ENCODE measurements at regions of chr15 and their contacts with region 1.

Region 1: DNA sequence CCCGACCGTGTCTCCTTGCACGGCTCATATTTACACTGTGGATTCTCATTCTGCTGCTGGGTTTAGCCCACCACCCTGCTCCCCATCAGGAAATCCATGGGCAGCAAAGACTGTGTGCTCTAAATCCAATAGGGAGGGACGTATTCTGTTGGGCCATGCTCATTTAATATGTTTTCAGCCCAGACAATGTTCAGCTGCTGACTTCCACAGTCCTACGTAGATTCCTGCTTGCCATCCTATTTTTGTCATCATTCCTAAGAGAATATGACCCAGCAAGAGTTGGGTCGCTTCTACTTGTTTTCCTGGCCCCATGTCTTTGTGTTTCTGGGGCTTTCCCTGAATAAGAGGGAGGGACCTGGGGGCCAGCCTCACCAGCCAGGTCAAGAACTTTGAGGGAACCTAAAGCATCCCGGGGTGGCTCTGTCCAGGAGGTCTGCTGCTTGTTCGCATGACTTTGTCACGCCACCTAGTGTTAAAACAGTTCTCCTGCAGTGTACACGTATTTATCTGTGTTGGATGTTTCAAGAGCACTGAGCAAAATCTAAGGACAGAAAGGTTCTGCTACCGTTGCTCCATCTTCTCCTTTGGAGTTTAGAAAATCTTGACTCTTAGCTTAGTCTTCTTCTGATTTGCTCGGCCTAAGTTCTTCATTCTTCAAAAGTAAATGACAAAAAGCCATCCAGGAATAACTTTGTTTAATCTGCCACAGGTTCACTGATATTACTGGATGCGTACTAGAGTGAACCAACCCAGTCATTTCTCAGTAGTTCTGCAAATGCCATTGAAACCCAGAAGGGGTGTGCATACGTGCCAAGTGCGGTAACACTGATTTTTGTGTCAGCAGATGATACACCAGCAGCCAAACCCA is 79.8 kb upstream of the NR2E3 start:
- DNase-seq: peak; percentile 85 to 88
- ATAC-seq: peak; percentile 88 to 98
- H3K4me3 ChIP-seq: no peak overlapping the region
- H3K27ac ChIP-seq: no peak overlapping the region
- H3K4me1 ChIP-seq: peaks cover 4% of the 10 kb centered on the region; the same call in 2 of the 3 replicates
- CTCF ChIP-seq: peak; percentile 91
- EP300 ChIP-seq: no peak
- POLR2A ChIP-seq: no peak
- RAD21 ChIP-seq: peak; percentile 80 to 81

Region 2: DNA sequence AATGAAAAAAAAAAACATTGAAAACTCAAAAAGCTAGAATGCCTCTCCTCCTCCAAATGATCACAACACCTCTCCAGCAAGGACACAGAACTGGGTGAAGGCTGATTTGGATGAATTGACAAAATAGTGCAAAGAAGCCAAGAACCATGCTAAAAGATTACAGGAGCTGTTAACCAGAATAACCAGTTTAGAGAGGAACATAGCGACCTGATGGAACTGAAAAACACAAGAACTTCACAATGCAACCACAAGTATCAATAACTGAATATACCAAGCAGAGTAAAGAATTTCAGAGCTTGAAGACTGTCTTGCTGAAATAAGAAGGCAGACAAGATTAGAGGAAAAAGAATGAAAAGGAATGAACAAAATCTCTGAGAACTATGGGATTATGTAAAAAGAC is 705.9 kb before region 1 on chr15:
- CTCF ChIA-PET with region 1: no interaction called
- POLR2A ChIA-PET with region 1: no interaction called
- DNase-seq: no peak
- ATAC-seq: no peak
- H3K4me3 ChIP-seq: no peak overlapping the region
- H3K27ac ChIP-seq: no peak overlapping the region
- H3K4me1 ChIP-seq: no peaks in the 10 kb centered on the region
- CTCF ChIP-seq: no peak
- EP300 ChIP-seq: no peak
- POLR2A ChIP-seq: no peak
- RAD21 ChIP-seq: no peak

Region 3: GRCh38 chr15:71698030-71698429 is 32.5 kb before region 1 on chr15:
- CTCF ChIA-PET with region 1: no interaction called
- POLR2A ChIA-PET with region 1: no interaction called
- DNase-seq: no peak
- ATAC-seq: no peak
- H3K4me3 ChIP-seq: no peak overlapping the region
- H3K27ac ChIP-seq: no peak overlapping the region
- H3K4me1 ChIP-seq: no peaks in the 10 kb centered on the region
- CTCF ChIP-seq: no peak
- EP300 ChIP-seq: no peak
- POLR2A ChIP-seq: no peak
- RAD21 ChIP-seq: no peak

Region 4: GRCh38 chr15:71716990-71717389 is 13.5 kb before region 1 on chr15:
- CTCF ChIA-PET with region 1: interaction called, 84 read pairs
- POLR2A ChIA-PET with region 1: no interaction called
- DNase-seq: no peak
- ATAC-seq: no peak
- H3K4me3 ChIP-seq: no peak overlapping the region
- H3K27ac ChIP-seq: peak overlapping the region in 1 of 2 experiments; percentile 12; a peak in 1 of 6 replicates
- H3K4me1 ChIP-seq: peaks cover 8% of the 10 kb centered on the region
- CTCF ChIP-seq: no peak
- EP300 ChIP-seq: no peak
- POLR2A ChIP-seq: no peak
- RAD21 ChIP-seq: no peak